ENCODE measurements at regions of chr21 and their contacts with region 1.

Region 1: DNA sequence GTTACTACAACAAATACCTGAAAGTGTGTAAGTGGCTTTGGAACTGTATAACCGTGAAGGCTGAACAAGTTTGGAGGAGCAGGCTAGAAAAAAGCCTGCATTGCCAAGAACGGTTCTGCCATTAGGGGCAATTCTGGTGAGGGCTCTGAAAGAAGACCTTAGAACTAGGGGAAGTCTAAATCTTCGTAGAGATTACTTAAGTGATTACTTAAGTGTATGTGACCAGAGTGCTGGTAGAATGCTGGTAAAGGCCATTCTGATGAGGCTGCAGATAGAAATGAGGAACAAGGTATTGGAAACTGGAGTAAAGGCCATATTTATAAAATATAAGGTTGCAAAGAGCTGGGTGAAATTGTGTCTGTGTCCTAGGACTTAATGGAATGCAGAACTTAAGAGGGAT is 158.0 kb downstream of the CLIC6 start:
- DNase-seq: no peak
- ATAC-seq: no peak
- H3K4me3 ChIP-seq: no peak overlapping the region
- H3K27ac ChIP-seq: no peak overlapping the region
- H3K4me1 ChIP-seq: no peaks in the 10 kb centered on the region
- H3K27me3 ChIP-seq: no peaks in the 10 kb centered on the region
- CTCF ChIP-seq: no peak

Region 2: DNA sequence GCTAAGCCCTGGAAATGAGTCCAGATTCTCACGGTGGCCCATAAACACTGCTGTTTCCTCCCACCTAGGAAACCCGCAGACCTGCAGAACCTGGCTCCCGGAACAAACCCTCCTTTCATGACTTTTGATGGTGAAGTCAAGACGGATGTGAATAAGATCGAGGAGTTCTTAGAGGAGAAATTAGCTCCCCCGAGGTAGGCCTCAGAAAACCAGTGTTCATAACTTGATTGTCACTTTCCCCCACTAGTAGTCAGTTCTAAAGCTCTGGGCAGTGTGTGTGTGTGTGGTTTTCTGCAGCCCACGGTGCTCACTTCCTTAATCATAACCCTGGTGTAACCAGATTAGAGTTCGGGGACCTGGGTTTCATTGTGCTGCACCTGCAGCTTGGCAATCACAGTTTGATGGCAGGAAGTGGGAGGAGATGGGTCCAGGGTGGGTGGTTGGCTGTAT is 118.9 kb before region 1 on chr21:
- CTCF ChIA-PET with region 1: no interaction called
- POLR2A ChIA-PET with region 1: interaction called, 14 read pairs
- in situ Hi-C with region 1: no loop called
- intact Hi-C with region 1: no loop called
- DNase-seq: no peak
- ATAC-seq: no peak
- H3K4me3 ChIP-seq: no peak overlapping the region
- H3K27ac ChIP-seq: no peak overlapping the region
- H3K4me1 ChIP-seq: no peaks in the 10 kb centered on the region
- H3K27me3 ChIP-seq: peaks cover 7% of the 10 kb centered on the region
- CTCF ChIP-seq: no peak

Measured in Panc1 (cell line).